ENCODE measurements at regions of chr1 and their contacts with region 1.

Region 1: GRCh38 chr1:54121482-54122134 is 31.2 kb downstream of the CDCP2 start:
- DNase-seq: peak; percentile 65 to 82
- H3K4me3 ChIP-seq: peak overlapping the region; percentile 15 to 53 (median 31)
- H3K27ac ChIP-seq: no peak overlapping the region
- H3K4me1 ChIP-seq: peaks cover 0 to 4% of the 10 kb centered on the region in 2 donors
- H3K27me3 ChIP-seq: no peaks in the 10 kb centered on the region
- CTCF ChIP-seq: peak in 2 of 3 donors; percentile 68 to 73
- POLR2A ChIP-seq: no peak

Region 2: DNA sequence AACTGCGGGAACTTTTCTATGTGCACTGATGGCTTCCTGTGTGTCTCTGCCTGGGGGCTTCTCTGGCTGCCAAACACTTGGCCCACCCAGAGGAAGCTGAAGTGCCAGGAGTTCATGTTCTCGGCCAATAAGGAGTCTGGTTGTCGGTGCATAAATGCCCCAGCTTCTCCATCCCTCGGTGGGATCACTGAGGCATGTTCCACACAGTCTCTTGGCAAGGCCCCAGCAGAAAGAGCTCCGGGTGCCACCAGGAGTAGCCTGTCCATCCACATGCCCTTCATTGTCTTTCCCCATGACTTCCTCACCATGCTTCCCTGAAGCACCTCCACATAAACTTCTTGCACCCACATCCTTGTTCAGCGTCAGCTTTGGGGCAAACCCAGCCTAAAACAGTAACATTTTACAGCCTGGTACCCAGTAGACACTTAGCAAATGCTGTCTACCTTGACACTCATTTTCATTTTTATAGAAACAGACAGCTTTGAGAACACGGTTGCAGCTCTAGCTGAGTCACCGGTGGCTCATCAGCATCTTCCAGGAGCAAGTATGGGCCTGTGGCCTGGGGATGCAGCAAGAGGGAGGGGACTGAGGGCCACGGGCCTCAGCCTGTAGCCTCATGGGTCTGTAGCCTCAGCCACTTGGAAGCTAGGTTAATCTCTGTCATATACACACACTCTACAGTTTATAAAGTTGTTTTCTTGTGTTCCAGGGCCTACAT is 46.0 kb after region 1 on chr1:
- intact Hi-C with region 1: no loop called
- DNase-seq: no peak
- H3K4me3 ChIP-seq: no peak overlapping the region
- H3K27ac ChIP-seq: no peak overlapping the region
- H3K4me1 ChIP-seq: no peaks in the 10 kb centered on the region
- H3K27me3 ChIP-seq: no peaks in the 10 kb centered on the region
- CTCF ChIP-seq: no peak
- POLR2A ChIP-seq: no peak

Region 3: GRCh38 chr1:54277451-54278341 is 156.1 kb after region 1 on chr1:
- intact Hi-C with region 1: no loop called
- DNase-seq: no peak
- H3K4me3 ChIP-seq: no peak overlapping the region
- H3K27ac ChIP-seq: peak overlapping the region; percentile 87 to 95
- H3K4me1 ChIP-seq: peaks cover 22 to 49% of the 10 kb centered on the region in 2 donors
- H3K27me3 ChIP-seq: no peaks in the 10 kb centered on the region
- CTCF ChIP-seq: no peak
- POLR2A ChIP-seq: no peak

Region 4: DNA sequence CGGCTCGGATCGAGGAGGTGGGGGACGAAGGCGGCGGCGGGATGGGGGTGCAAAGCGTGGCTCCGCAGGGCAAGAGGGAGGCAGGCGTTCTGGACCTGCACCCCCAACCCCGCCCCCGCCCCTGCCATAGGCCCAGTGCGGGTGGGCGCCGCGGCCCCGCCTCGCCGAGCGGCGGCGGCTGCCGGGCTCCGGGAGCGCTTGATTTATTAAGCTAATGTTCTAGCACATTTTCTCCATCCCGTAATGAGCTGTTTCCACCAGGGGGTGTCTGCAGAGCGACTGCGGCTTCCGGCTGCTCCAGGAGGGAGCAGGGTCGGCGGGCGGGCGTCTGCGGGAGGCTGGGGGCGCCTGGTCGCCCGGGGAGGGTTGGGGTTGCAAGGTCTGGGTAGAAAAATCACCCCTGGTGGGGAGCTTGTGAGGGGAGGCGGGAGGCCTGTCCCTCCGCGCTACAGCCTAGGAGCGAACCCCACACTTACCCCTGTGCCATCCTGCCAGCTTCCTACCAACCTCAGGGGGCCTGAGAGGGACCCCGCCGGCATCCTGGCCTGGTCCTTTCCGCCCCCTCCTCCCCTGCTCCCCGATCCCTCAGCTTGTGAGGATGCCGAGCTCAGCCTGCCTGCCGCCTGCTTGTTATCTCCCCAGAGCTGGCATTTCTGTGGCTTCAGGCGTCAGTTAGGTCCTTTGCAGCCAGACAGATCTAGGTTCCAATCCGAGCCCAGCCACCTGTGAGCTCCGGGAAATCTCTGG is 377.9 kb after region 1 on chr1:
- intact Hi-C with region 1: loop called (anchors 10 kb)
- DNase-seq: no peak
- H3K4me3 ChIP-seq: peak overlapping the region; percentile 27 to 66 (median 50)
- H3K27ac ChIP-seq: no peak overlapping the region
- H3K4me1 ChIP-seq: peaks cover 0 to 6% of the 10 kb centered on the region in 2 donors
- H3K27me3 ChIP-seq: no peaks in the 10 kb centered on the region
- CTCF ChIP-seq: peak in 1 of 3 donors; percentile 34
- POLR2A ChIP-seq: no peak

Region 5: DNA sequence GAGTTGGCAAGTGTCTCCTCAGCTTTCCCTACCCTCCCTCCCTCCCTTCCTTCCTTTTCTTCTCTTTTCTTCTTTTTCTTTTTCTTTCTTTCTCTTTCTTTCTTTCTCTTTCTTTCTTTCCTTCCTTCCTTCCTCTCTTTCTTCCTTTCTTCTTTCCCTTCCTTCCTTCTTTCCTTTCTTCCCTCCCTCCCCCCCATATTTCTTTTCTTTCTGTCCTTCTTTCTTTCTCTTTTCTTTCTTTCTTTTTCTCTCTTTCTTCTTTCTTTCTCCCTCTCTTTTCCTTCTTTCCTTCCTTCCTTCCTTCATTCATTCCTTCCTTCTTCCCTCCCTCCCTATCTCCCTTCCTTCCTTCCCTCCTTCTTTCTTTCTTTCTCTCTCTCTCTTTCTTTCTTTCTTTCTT is 698.1 kb after region 1 on chr1:
- intact Hi-C with region 1: loop called (anchors 5 kb)
- DNase-seq: no peak
- H3K4me3 ChIP-seq: no peak overlapping the region
- H3K27ac ChIP-seq: peak overlapping the region in 1 of 2 donors; percentile 73
- H3K4me1 ChIP-seq: no peaks in the 10 kb centered on the region
- H3K27me3 ChIP-seq: no peaks in the 10 kb centered on the region
- CTCF ChIP-seq: no peak
- POLR2A ChIP-seq: no peak